Upper lobe of right lung (tissue), 1 donor: ENCODE measurements at regions of chr2 and their contacts with region 1.

Region 1: GRCh38 chr2:11411768-11412448 is 54.1 kb downstream of the E2F6 start:
- DNase-seq: no peak
- ATAC-seq: peak; percentile 86
- H3K4me3 ChIP-seq: peak overlapping the region; percentile 56
- H3K27ac ChIP-seq: peak overlapping the region; percentile 17
- H3K4me1 ChIP-seq: peaks cover 12% of the 10 kb centered on the region
- H3K27me3 ChIP-seq: no peaks in the 10 kb centered on the region
- CTCF ChIP-seq: peak; percentile 77

Region 2: GRCh38 chr2:11032396-11032795 is 379.5 kb before region 1 on chr2:
- intact Hi-C with region 1: no loop called
- DNase-seq: no peak
- ATAC-seq: no peak
- H3K4me3 ChIP-seq: no peak overlapping the region
- H3K27ac ChIP-seq: no peak overlapping the region
- H3K4me1 ChIP-seq: no peaks in the 10 kb centered on the region
- H3K27me3 ChIP-seq: no peaks in the 10 kb centered on the region
- CTCF ChIP-seq: no peak

Region 3: GRCh38 chr2:11129598-11130449 is 282.1 kb before region 1 on chr2:
- intact Hi-C with region 1: loop called (anchors 10 kb)
- DNase-seq: peak; percentile 90
- ATAC-seq: peak; percentile 84
- H3K4me3 ChIP-seq: peak overlapping the region; percentile 46
- H3K27ac ChIP-seq: peak overlapping the region; percentile 68
- H3K4me1 ChIP-seq: peaks cover 24% of the 10 kb centered on the region
- H3K27me3 ChIP-seq: no peaks in the 10 kb centered on the region
- CTCF ChIP-seq: peak; percentile 39

Region 4: GRCh38 chr2:11234309-11234708 is 177.6 kb before region 1 on chr2:
- intact Hi-C with region 1: loop called (anchors 10 kb)
- DNase-seq: no peak
- ATAC-seq: peak; percentile 37
- H3K4me3 ChIP-seq: no peak overlapping the region
- H3K27ac ChIP-seq: no peak overlapping the region
- H3K4me1 ChIP-seq: no peaks in the 10 kb centered on the region
- H3K27me3 ChIP-seq: no peaks in the 10 kb centered on the region
- CTCF ChIP-seq: peak; percentile 57

Region 5: DNA sequence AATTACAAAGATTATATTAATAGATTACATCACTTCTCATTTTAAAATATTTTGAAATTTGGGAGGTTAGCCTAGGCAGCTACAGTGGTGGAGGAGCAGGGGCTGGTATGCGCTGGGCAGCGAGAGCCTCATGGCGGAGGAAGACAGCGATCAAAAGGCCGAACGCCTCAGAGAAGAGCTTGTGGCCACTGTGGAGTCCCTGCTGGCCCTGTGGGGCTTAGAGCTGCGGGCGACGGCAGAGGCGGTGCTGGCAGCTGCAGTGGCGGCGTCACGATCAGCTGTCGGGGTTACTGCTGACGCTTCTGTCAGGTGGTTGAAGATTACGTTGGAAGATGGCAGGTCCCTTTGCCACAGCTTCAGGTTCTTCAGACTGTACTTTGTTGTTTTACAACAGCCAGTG is 154.8 kb before region 1 on chr2:
- intact Hi-C with region 1: no loop called
- DNase-seq: no peak
- ATAC-seq: no peak
- H3K4me3 ChIP-seq: no peak overlapping the region
- H3K27ac ChIP-seq: no peak overlapping the region
- H3K4me1 ChIP-seq: no peaks in the 10 kb centered on the region
- H3K27me3 ChIP-seq: no peaks in the 10 kb centered on the region
- CTCF ChIP-seq: no peak

Region 6: GRCh38 chr2:11329781-11330180 is 82.1 kb before region 1 on chr2:
- intact Hi-C with region 1: no loop called
- DNase-seq: no peak
- ATAC-seq: no peak
- H3K4me3 ChIP-seq: no peak overlapping the region
- H3K27ac ChIP-seq: no peak overlapping the region
- H3K4me1 ChIP-seq: peaks cover 34% of the 10 kb centered on the region
- H3K27me3 ChIP-seq: no peaks in the 10 kb centered on the region
- CTCF ChIP-seq: no peak

Region 7: GRCh38 chr2:11505652-11506610 is 94.0 kb after region 1 on chr2:
- intact Hi-C with region 1: no loop called
- DNase-seq: no peak
- ATAC-seq: peak; percentile 40
- H3K4me3 ChIP-seq: no peak overlapping the region
- H3K27ac ChIP-seq: no peak overlapping the region
- H3K4me1 ChIP-seq: no peaks in the 10 kb centered on the region
- H3K27me3 ChIP-seq: peaks cover 12% of the 10 kb centered on the region
- CTCF ChIP-seq: no peak